Activated naive CD4-positive, alpha-beta T cell treated with anti-CD3 and anti-CD28 coated beads for 36 hours (primary cell): ENCODE measurements at regions of chr2 and their contacts with region 1.

Region 1: DNA sequence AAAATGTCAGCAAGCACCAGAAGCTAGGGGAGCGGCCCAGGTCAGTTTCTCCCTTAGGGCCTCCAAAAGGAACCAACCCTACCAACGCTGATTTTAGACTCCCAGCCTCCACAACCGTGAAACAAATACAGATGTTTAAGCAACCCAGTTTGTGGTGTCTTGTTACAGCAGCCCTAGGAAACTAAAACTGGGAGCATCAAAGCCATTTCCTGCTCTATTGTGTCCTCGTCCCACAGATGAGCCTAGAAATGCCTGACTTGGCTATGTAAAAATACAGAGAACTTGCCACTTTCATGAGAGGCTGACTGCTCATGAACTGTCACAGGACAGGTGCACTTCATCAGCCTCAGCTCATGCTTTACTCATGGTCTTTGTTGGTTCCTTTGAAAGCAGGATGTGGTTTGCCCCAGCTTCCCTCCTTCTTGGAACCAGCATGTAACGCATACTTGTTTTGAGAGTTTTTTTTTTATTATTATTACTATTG is 97.6 kb upstream of the SLC39A10 start:
- DNase-seq: peak; percentile 95
- H3K4me3 Mint-ChIP-seq: peak overlapping the region; percentile 59
- H3K27ac Mint-ChIP-seq: peak overlapping the region; percentile 98
- H3K4me1 Mint-ChIP-seq: peaks cover 71% of the 10 kb centered on the region
- H3K27me3 Mint-ChIP-seq: no peaks in the 10 kb centered on the region

Region 2: DNA sequence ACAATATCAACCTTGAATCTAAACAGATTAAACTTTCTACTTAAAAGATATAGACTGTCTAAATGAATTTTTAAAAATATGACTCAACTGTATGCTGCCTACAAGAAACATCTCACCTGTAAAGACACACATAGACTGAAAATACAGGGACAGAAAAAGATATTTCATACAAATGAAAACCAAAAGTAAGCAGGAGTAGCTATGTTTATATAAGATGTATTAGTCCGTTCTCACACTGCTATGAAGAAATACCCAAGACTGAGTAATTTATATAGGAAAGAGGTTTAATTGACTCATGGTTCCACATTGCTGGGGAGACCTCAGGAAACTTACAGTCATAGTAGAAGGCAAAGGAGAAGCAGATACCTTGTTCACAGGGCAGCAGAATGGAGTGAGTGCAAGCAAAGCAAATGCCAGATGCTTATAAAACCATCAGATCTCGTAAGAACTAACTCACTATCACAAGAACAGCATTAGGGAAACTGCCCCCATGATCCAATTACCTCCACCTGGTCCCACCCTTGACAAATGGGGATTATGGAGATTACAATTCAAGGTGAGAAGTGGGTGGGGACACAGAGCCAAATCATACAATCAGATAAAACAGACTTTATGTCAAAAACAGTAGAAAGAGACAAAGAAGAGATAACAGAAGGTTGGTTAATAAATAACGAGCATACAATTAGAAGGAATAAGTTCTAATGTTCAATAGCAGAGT is 116.9 kb before region 1 on chr2:
- CTCF ChIA-PET with region 1: interaction called, 3 read pairs
- intact Hi-C with region 1: loop called (anchors 1 kb)
- DNase-seq: peak; percentile 19
- H3K4me3 Mint-ChIP-seq: no peak overlapping the region
- H3K27ac Mint-ChIP-seq: peak overlapping the region; percentile 18
- H3K4me1 Mint-ChIP-seq: peaks cover 8% of the 10 kb centered on the region
- H3K27me3 Mint-ChIP-seq: no peaks in the 10 kb centered on the region

Region 3: DNA sequence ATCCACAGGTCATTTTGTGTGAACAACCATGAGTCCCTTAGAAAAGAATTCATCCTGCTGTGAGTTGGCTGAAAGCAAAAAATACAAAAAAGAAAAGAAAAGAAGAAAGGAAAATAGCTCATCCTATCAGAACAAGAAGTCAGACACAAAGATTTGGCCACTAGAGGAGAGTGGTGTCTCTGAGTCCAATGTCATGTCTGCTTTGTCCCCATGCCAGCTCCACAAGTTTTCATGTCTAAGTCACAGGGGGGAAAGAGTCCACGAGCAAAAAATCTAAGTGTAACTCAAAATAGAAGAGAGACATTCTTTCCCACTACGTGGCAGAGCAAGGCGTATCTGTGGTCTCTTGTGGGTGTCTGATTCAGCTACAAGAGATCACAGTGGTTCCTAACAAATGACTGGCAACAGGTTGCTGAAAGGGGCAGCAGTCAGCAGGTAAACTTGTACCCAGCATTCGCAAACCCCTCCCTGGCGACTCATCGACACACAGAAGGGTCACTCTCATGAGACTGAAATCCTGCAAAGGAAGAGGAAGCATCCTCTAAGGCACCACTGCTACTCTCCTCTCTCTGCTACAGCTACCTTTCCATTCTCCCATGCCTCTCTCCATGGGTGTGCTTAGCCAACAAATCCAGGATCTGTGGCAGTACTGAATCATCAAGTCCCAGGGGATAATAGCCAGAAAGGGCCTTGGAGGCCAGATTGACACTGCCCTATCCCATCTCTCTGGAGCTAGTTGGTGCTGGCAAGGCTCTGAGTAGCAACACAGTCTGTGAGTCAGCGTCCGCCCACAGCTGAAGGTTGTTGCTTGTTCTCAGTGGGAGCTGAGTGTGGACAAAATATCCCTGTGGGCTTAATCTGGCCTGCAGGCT is 25.5 kb before region 1 on chr2:
- CTCF ChIA-PET with region 1: interaction called, 56 read pairs
- intact Hi-C with region 1: loop called (anchors 1 kb)
- DNase-seq: peak; percentile 85
- H3K4me3 Mint-ChIP-seq: peak overlapping the region; percentile 75
- H3K27ac Mint-ChIP-seq: peak overlapping the region; percentile 98
- H3K4me1 Mint-ChIP-seq: peaks cover 79% of the 10 kb centered on the region
- H3K27me3 Mint-ChIP-seq: no peaks in the 10 kb centered on the region

Region 4: GRCh38 chr2:195636890-195637289 is 77.4 kb after region 1 on chr2:
- CTCF ChIA-PET with region 1: no interaction called
- intact Hi-C with region 1: no loop called
- DNase-seq: no peak
- H3K4me3 Mint-ChIP-seq: no peak overlapping the region
- H3K27ac Mint-ChIP-seq: no peak overlapping the region
- H3K4me1 Mint-ChIP-seq: peaks cover 4% of the 10 kb centered on the region
- H3K27me3 Mint-ChIP-seq: no peaks in the 10 kb centered on the region

Region 5: GRCh38 chr2:195923889-195924288 is 364.4 kb after region 1 on chr2:
- CTCF ChIA-PET with region 1: no interaction called
- intact Hi-C with region 1: loop called (anchors 1 kb)
- DNase-seq: no peak
- H3K4me3 Mint-ChIP-seq: no peak overlapping the region
- H3K27ac Mint-ChIP-seq: no peak overlapping the region
- H3K4me1 Mint-ChIP-seq: no peaks in the 10 kb centered on the region
- H3K27me3 Mint-ChIP-seq: no peaks in the 10 kb centered on the region

Region 6: DNA sequence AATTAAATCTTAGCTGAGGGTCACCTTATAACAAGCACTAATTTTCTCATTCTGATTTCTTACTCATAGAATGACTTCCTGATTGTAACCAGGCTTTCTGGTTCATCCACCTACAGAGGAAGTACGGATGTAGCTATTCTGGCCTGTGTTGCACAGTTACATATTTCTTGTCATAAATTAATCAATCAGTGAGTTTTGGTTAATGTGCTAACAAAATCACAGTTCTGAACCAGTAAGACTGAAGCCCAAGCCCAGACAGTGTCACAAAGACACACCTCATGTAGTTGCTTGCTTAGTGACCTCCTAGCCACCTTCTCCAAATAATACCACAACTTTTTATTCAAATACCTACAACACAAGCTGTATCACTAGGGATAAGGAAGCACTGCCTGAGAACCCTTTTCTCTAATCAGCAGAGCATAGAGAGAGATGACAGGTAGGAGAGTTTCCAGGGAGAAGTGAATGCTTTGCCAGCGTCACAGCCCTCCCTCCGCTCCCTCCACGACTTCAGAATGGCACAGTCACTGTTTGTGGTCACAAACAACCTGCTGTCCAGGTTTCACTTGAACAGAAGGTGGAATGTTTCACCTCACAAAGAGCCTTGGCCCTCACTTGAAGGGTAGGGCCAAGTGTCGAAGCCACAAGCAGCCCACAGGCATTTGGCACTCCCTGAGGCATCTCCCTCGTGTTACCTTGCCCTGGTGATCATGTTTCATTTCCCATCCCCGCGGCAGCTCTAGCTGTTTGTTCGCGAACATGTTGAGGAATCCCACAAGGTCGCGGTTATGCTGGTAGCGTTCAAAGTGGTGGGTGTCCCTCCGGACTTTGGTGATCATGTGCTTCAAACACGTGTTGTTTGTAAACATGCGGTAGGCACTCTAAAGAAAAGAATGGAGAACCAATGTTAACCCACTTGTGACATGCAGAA is 732.7 kb after region 1 on chr2:
- CTCF ChIA-PET with region 1: no interaction called
- intact Hi-C with region 1: loop called (anchors 2 kb)
- DNase-seq: no peak
- H3K4me3 Mint-ChIP-seq: no peak overlapping the region
- H3K27ac Mint-ChIP-seq: no peak overlapping the region
- H3K4me1 Mint-ChIP-seq: peaks cover 46% of the 10 kb centered on the region
- H3K27me3 Mint-ChIP-seq: no peaks in the 10 kb centered on the region